Caco-2 (cell line): ENCODE measurements at regions of chr12 and their contacts with region 1.

Region 1: GRCh38 chr12:79121487-79121886 is 256.9 kb downstream of the SYT1 start:
- DNase-seq: peak in 1 of 2 experiments; percentile 16
- H3K4me3 ChIP-seq: no peak overlapping the region
- H3K4me3 Mint-ChIP-seq: no peak overlapping the region
- H3K27ac Mint-ChIP-seq: no peak overlapping the region
- H3K4me1 ChIP-seq: no peaks in the 10 kb centered on the region
- H3K4me1 Mint-ChIP-seq: peaks cover 5% of the 10 kb centered on the region
- H3K27me3 ChIP-seq: no peaks in the 10 kb centered on the region
- H3K27me3 Mint-ChIP-seq: no peaks in the 10 kb centered on the region
- CTCF ChIP-seq: peak; percentile 42 to 58

Region 2: GRCh38 chr12:79155683-79156082 is 34.2 kb after region 1 on chr12:
- CTCF ChIA-PET with region 1: no interaction called
- POLR2A ChIA-PET with region 1: no interaction called
- intact Hi-C with region 1: loop called (anchors 5 kb)
- DNase-seq: no peak
- H3K4me3 ChIP-seq: no peak overlapping the region
- H3K4me3 Mint-ChIP-seq: no peak overlapping the region
- H3K27ac Mint-ChIP-seq: no peak overlapping the region
- H3K4me1 ChIP-seq: peaks cover 5% of the 10 kb centered on the region; the same call in 1 of the 2 replicates
- H3K4me1 Mint-ChIP-seq: no peaks in the 10 kb centered on the region
- H3K27me3 ChIP-seq: no peaks in the 10 kb centered on the region
- H3K27me3 Mint-ChIP-seq: peaks cover 10% of the 10 kb centered on the region
- CTCF ChIP-seq: no peak